Heart left ventricle (tissue), 16 donors: ENCODE measurements at regions of chr1 and their contacts with region 1.

Region 1: GRCh38 chr1:210239349-210240111 is 6.9 kb downstream of the SERTAD4 start:
- DNase-seq: peak in 1 of 5 donors; percentile 38
- ATAC-seq: no peak
- H3K4me3 ChIP-seq: peak overlapping the region in 2 of 12 donors; percentile 0 to 49
- H3K27ac ChIP-seq: peak overlapping the region in 7 of 12 donors; percentile 0 to 82 (median 21)
- H3K4me1 ChIP-seq: peaks cover 0 to 66% (median 14%) of the 10 kb centered on the region in 12 donors
- H3K27me3 ChIP-seq: peaks cover 0 to 2% (median 0%) of the 10 kb centered on the region in 9 donors
- CTCF ChIP-seq: peak in 10 of 12 donors; percentile 12 to 55 (median 31)
- POLR2A ChIP-seq: no peak

Region 2: DNA sequence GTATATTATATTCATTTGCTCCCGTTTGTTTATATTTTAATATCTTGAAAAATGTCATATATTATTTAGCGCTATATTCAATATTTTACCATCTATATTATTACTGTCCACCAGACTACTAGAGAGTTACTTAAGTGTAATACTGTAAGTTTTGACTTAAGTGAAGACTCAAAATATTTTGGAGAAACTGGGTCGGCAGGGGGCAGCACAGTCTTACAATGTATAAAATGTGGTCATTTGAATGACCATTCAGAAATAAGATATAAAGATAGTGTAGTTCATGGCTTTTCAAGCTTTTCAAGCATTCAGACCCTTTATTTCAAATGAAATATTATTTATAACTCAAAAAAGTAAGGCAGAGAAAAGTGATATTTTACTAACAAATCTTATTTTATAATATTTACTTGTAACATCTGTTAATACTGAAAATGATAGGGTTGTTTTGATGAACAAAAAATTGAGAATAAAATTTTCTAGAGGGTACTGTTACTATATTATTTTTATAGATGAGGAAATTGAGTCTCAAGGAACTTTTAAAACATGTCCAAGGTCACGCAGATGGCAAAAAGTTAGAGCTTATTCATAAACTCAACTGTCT is 96.0 kb before region 1 on chr1:
- intact Hi-C with region 1: no loop called
- DNase-seq: peak; percentile 47 to 78 (median 61)
- ATAC-seq: peak in 1 of 4 donors; percentile 51
- H3K4me3 ChIP-seq: no peak overlapping the region
- H3K27ac ChIP-seq: no peak overlapping the region
- H3K4me1 ChIP-seq: no peaks in the 10 kb centered on the region
- H3K27me3 ChIP-seq: peaks cover 0 to 7% (median 0%) of the 10 kb centered on the region in 9 donors
- CTCF ChIP-seq: peak; percentile 55 to 80 (median 68)
- POLR2A ChIP-seq: no peak

Region 3: DNA sequence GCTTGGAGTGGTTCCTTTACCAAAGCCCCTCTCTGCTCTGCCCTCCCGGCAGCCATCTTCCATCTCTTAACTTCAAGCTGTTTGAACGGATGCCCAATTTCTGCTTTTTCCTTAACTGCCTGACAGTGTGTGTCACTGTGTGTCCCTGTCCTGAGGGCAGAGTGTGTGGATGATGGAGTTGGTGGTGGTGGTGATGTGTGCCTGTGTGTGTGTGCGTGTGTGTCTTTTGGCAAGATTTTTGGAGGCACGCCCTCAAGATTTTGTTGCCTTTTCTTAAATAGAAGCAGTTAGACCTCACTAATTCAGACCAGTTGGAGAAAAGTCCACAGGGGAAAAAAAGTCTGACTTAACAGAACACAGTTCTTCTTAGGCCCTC is 23.4 kb after region 1 on chr1:
- intact Hi-C with region 1: loop called in 1 of 10 experiments (anchors 1 kb)
- DNase-seq: peak in 3 of 5 donors; percentile 28 to 64 (median 28)
- ATAC-seq: peak in 3 of 4 donors; percentile 32 to 64 (median 41)
- H3K4me3 ChIP-seq: no peak overlapping the region
- H3K27ac ChIP-seq: peak overlapping the region in 10 of 12 donors; percentile 10 to 86 (median 70)
- H3K4me1 ChIP-seq: peaks cover 0 to 69% (median 8%) of the 10 kb centered on the region in 12 donors
- H3K27me3 ChIP-seq: peaks cover 0 to 7% (median 0%) of the 10 kb centered on the region in 9 donors
- CTCF ChIP-seq: no peak
- POLR2A ChIP-seq: no peak

Region 4: GRCh38 chr1:210292231-210292871 is 52.8 kb after region 1 on chr1:
- intact Hi-C with region 1: loop called in 6 of 10 experiments (anchors 5 to 10 kb)
- DNase-seq: peak; percentile 42 to 78 (median 62)
- ATAC-seq: peak; percentile 66 to 77 (median 75)
- H3K4me3 ChIP-seq: peak overlapping the region; percentile 24 to 60 (median 52)
- H3K27ac ChIP-seq: peak overlapping the region; percentile 36 to 90 (median 75)
- H3K4me1 ChIP-seq: peaks cover 0 to 47% (median 17%) of the 10 kb centered on the region in 12 donors
- H3K27me3 ChIP-seq: peaks cover 0 to 33% (median 0%) of the 10 kb centered on the region in 9 donors
- CTCF ChIP-seq: peak in 10 of 12 donors; percentile 18 to 56 (median 36)
- POLR2A ChIP-seq: no peak

Region 5: GRCh38 chr1:210438928-210439809 is 199.6 kb after region 1 on chr1:
- intact Hi-C with region 1: no loop called
- DNase-seq: no peak
- ATAC-seq: peak in 1 of 4 donors; percentile 73
- H3K4me3 ChIP-seq: no peak overlapping the region
- H3K27ac ChIP-seq: no peak overlapping the region
- H3K4me1 ChIP-seq: peaks cover 0 to 3% (median 0%) of the 10 kb centered on the region in 12 donors
- H3K27me3 ChIP-seq: no peaks in the 10 kb centered on the region
- CTCF ChIP-seq: no peak
- POLR2A ChIP-seq: no peak